Activated CD4-positive, alpha-beta T cell treated with anti-CD3 and anti-CD28 coated beads for 36 hours (primary cell): ENCODE measurements at regions of chr11 and their contacts with region 1.

Region 1: GRCh38 chr11:88174709-88175568 is at the start of gene RAB38:
- DNase-seq: peak; percentile 83
- ATAC-seq: peak; percentile 64
- H3K4me3 Mint-ChIP-seq: peak within 1 kb of the TSS; percentile 71
- H3K27ac Mint-ChIP-seq: peak within 1 kb of the TSS; percentile 72
- H3K4me1 Mint-ChIP-seq: peaks cover 46% of the 10 kb centered on the region
- H3K27me3 Mint-ChIP-seq: peaks cover 14% of the 10 kb centered on the region
- total RNA-seq, gene RAB38: 2.9 to 3.1 TPM

Region 2: GRCh38 chr11:86802601-86803051 is 1372.3 kb before region 1 on chr11:
- CTCF ChIA-PET with region 1: no interaction called
- POLR2A ChIA-PET with region 1: no interaction called
- intact Hi-C with region 1: loop called in 1 of 2 experiments (anchors 10 kb)
- DNase-seq: peak; percentile 39
- ATAC-seq: peak; percentile 34
- H3K4me3 Mint-ChIP-seq: no peak overlapping the region
- H3K27ac Mint-ChIP-seq: no peak overlapping the region
- H3K4me1 Mint-ChIP-seq: peaks cover 62% of the 10 kb centered on the region
- H3K27me3 Mint-ChIP-seq: peaks cover 55% of the 10 kb centered on the region

Region 3: DNA sequence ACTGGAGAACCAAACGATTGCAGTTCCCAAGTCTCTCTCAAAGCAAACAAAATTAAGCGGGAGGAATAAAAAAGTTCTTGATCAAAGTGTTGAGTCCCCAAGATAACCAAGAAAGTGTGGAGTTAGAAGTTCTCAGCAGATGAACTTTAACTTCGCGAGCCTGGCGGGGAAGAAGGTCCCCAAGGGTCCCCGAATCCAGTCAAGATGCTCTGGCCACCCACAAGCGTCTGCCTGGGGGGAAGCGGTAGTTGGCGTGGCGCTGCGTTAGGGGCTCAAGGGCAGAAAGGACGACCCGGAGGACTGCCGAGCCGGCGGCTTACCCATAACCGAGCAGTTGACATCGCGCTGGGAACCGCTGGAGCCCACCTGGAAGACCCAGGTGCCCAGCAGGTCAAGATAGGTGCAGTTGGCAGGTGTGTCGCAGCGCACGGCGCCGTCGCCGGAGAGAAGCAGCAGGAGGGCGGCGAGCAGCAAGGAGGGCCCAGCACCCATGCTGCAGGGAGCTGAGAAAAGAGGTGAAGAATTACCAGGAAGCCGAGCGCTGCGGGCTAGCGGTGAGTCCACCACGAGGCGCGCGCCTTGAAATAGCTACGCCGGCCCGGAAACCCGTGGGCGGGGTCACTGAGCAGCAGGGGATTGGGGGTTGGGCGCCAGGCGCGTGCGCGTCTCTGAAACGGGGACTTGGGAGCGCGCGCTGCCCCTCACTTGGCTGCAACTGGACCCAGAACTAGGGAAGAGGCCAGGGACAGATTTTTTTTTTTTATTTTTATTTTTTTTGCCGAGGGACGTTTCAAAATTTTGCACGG is 162.4 kb after region 1 on chr11 and contains the start of gene CTSC:
- CTCF ChIA-PET with region 1: no interaction called
- POLR2A ChIA-PET with region 1: no interaction called
- intact Hi-C with region 1: loop called (anchors 1 to 2 kb)
- DNase-seq: peak; percentile 97
- ATAC-seq: peak; percentile 78
- H3K4me3 Mint-ChIP-seq: peak within 1 kb of the TSS; percentile 99
- H3K27ac Mint-ChIP-seq: peak within 1 kb of the TSS; percentile 89
- H3K4me1 Mint-ChIP-seq: peaks cover 47% of the 10 kb centered on the region
- H3K27me3 Mint-ChIP-seq: no peaks in the 10 kb centered on the region
- total RNA-seq, gene CTSC: 53.1 to 59.4 TPM

Region 4: DNA sequence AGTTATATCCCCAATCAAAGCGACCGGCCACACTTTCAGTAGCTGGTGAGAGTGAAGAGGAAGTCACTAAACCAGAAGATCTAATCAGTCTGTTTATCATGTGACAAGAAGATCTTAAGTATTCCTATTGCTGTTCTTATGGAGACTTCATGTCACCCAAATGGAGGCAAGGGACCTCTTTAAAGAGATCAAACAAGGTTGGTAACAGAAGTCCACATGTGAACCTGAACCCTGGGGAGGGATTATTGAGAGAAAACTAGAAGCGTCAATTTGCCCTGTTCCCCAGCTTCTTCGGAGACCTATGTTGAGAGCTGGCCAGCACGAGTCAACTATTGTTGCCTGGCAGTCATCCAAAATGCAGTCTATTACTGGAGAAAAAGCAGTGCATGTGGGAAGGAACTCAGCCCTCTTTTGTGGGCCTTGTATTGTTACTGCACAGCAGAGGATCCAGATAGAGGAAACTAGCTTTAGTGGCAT is 239.5 kb after region 1 on chr11:
- CTCF ChIA-PET with region 1: no interaction called
- POLR2A ChIA-PET with region 1: no interaction called
- intact Hi-C with region 1: loop called in 1 of 2 experiments (anchors 1 kb)
- DNase-seq: peak; percentile 39
- ATAC-seq: peak; percentile 26
- H3K4me3 Mint-ChIP-seq: peak overlapping the region; percentile 28
- H3K27ac Mint-ChIP-seq: peak overlapping the region; percentile 79
- H3K4me1 Mint-ChIP-seq: peaks cover 39% of the 10 kb centered on the region
- H3K27me3 Mint-ChIP-seq: no peaks in the 10 kb centered on the region

Region 5: DNA sequence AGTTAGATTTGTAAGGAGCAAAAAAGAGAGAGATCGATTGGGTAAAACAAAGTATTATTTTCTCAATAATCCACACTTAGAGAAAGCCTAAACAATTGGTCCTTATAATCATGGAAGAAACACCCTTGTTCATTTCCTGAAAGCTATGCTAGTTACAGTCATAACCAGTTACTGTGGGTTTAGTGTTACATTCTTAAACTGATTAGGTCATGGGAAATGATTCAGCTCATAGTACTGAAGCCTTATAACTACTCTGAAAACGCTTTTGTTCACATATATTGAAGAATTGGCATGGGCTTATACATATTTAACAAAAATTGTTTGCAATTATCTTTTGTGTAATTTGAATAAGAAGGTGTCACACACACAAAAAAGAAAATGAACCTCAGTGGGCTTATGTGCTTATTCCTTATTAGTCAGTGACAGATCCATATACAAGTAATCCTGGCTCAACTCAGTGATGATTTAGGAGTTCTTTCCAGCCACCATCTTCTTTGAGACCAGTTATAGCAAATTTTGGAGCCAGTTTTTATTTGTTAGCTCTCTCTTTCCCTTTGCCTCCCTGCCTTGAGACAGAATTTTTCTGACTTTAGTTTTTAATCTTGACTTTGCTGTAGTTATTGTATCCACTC is 361.1 kb after region 1 on chr11:
- CTCF ChIA-PET with region 1: interaction called, 5 read pairs
- POLR2A ChIA-PET with region 1: no interaction called
- intact Hi-C with region 1: loop called (anchors 1 to 5 kb)
- DNase-seq: no peak
- ATAC-seq: peak; percentile 100
- H3K4me3 Mint-ChIP-seq: no peak overlapping the region
- H3K27ac Mint-ChIP-seq: peak overlapping the region; percentile 42
- H3K4me1 Mint-ChIP-seq: peaks cover 21% of the 10 kb centered on the region
- H3K27me3 Mint-ChIP-seq: peaks cover 10% of the 10 kb centered on the region